ENCODE measurements at regions of chr7 and their contacts with region 1.

Region 1: DNA sequence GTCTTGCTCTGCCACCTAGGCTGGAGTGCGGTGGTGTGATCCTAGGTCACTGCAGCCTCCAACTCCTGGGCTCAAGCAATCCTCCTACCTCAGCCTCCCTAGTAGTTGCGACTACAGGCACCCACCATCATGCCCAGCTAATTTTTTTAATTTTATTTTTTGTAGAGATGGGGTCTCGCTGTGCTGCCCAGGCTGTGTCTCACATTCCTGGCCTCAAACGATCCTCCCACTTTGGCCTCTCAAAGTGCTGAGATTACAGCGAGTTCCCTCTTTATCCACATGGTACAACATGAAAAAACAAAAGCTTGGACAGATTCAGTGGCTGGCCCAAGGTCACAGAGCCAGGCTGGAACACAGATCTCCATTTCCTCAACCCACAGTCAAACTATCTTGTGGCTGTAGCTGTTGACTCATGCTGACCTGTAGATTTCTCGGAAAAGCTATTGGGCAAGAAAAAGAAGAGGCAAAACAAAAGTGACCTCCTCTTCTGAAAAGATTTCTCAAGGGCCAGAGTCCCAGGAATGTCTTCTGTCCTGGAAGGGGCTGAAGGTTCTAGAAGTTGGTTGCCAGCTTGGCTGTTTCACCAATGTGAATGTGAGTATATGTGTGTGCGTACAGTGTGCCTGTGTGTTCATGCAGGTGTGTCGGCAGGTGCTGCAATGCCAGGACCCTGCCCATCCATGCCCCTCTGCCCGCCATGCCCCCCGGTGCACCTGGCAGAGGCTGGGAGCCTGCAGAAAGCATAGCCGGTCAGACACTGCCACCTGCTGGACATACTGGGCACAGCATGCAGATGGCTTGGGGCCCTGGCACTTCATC is 28.4 kb downstream of the TMEM130 start:
- DNase-seq: peak; percentile 75
- ATAC-seq: peak; percentile 92
- H3K4me3 ChIP-seq: no peak overlapping the region
- H3K4me3 Mint-ChIP-seq: no peak overlapping the region
- H3K27ac ChIP-seq: no peak overlapping the region
- H3K27ac Mint-ChIP-seq: no peak overlapping the region
- H3K4me1 ChIP-seq: no peaks in the 10 kb centered on the region
- H3K4me1 Mint-ChIP-seq: no peaks in the 10 kb centered on the region
- H3K27me3 ChIP-seq: no peaks in the 10 kb centered on the region
- H3K27me3 Mint-ChIP-seq: peaks cover 20% of the 10 kb centered on the region
- CTCF ChIP-seq: peak; percentile 96

Region 2: GRCh38 chr7:98021588-98022351 is 819.6 kb before region 1 on chr7:
- CTCF ChIA-PET with region 1: interaction called, 5 read pairs
- POLR2A ChIA-PET with region 1: no interaction called
- intact Hi-C with region 1: loop called (anchors 10 kb)
- DNase-seq: peak; percentile 81
- ATAC-seq: peak; percentile 75
- H3K4me3 ChIP-seq: no peak overlapping the region
- H3K4me3 Mint-ChIP-seq: no peak overlapping the region
- H3K27ac ChIP-seq: no peak overlapping the region
- H3K27ac Mint-ChIP-seq: peak overlapping the region; percentile 34
- H3K4me1 ChIP-seq: no peaks in the 10 kb centered on the region
- H3K4me1 Mint-ChIP-seq: peaks cover 4% of the 10 kb centered on the region
- H3K27me3 ChIP-seq: peaks cover 0 to 25% (median 1%) of the 10 kb centered on the region in 4 experiments
- H3K27me3 Mint-ChIP-seq: peaks cover 23% of the 10 kb centered on the region
- CTCF ChIP-seq: peak; percentile 90

Region 3: DNA sequence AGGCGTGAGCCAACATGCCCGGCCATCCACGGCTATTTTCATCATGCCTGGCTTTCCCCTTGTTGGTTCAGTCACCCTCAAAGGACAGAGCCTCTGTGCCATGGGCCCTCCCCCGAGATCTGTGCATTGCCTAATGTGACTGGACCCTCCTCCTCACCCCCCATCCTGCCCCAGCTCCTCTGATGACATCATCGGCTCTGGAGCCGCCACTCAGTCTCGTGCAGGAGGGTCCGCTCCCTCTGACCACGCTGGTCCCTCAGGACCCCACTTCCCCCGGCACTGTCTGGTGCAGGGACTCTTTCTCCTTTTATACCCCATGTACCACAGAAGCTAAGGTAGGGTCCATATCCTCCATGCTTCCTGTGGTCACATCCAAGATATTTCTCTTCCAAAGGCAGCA is 407.3 kb before region 1 on chr7:
- CTCF ChIA-PET with region 1: interaction called, 53 read pairs
- POLR2A ChIA-PET with region 1: no interaction called
- intact Hi-C with region 1: no loop called
- DNase-seq: no peak
- ATAC-seq: no peak
- H3K4me3 ChIP-seq: no peak overlapping the region
- H3K4me3 Mint-ChIP-seq: no peak overlapping the region
- H3K27ac ChIP-seq: no peak overlapping the region
- H3K27ac Mint-ChIP-seq: no peak overlapping the region
- H3K4me1 ChIP-seq: peaks cover 0 to 5% of the 10 kb centered on the region in 2 donors
- H3K4me1 Mint-ChIP-seq: peaks cover 9% of the 10 kb centered on the region
- H3K27me3 ChIP-seq: no peaks in the 10 kb centered on the region
- H3K27me3 Mint-ChIP-seq: peaks cover 21% of the 10 kb centered on the region
- CTCF ChIP-seq: no peak

Region 4: DNA sequence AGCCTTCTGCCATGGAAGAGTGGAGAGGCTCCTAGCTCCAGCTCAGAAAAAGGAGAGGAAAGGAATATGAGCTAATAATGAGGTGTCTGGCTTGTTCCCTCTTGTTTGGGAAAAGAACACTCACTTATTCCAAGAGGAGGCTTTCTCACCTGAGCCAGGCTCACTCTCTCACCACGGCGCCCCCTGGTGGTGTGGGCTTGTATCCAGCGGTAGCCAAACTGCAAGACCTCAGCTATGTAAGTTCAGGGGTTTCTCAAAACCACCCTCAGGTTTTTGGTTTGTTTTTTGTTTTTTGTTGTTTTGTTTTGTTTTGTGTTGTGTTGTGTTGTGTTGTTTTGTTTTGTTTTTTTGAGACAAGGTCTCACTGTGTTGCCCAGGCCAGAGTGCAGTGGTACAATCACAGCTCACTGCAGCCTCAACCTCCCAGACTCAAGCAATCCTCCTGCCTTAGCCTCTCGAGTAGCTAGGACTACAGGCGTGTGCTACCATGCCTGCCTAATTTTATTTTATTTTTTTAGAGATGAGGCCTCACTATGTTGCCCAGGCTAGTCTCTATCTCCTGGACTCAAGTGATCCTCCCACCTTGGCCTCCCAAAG is 95.6 kb before region 1 on chr7:
- CTCF ChIA-PET with region 1: interaction called, 11 read pairs
- POLR2A ChIA-PET with region 1: no interaction called
- intact Hi-C with region 1: no loop called
- DNase-seq: peak; percentile 65
- ATAC-seq: no peak
- H3K4me3 ChIP-seq: no peak overlapping the region
- H3K4me3 Mint-ChIP-seq: no peak overlapping the region
- H3K27ac ChIP-seq: no peak overlapping the region
- H3K27ac Mint-ChIP-seq: no peak overlapping the region
- H3K4me1 ChIP-seq: no peaks in the 10 kb centered on the region
- H3K4me1 Mint-ChIP-seq: no peaks in the 10 kb centered on the region
- H3K27me3 ChIP-seq: peaks cover 0 to 14% (median 0%) of the 10 kb centered on the region in 4 experiments
- H3K27me3 Mint-ChIP-seq: peaks cover 22% of the 10 kb centered on the region
- CTCF ChIP-seq: peak; percentile 89

Region 5: GRCh38 chr7:98878365-98879165 is 37.2 kb after region 1 on chr7 and contains the start of gene TRRAP:
- CTCF ChIA-PET with region 1: interaction called, 24 read pairs
- POLR2A ChIA-PET with region 1: no interaction called
- intact Hi-C with region 1: loop called (anchors 2 kb)
- DNase-seq: peak; percentile 91
- ATAC-seq: peak; percentile 75
- H3K4me3 ChIP-seq: peak within 1 kb of the TSS; percentile 12 to 100 (median 98)
- H3K4me3 Mint-ChIP-seq: peak within 1 kb of the TSS; percentile 92
- H3K27ac ChIP-seq: peak within 1 kb of the TSS; percentile 75 to 89
- H3K27ac Mint-ChIP-seq: peak within 1 kb of the TSS; percentile 90
- H3K4me1 ChIP-seq: peaks cover 11 to 16% of the 10 kb centered on the region in 2 donors
- H3K4me1 Mint-ChIP-seq: peaks cover 11% of the 10 kb centered on the region
- H3K27me3 ChIP-seq: peaks cover 0 to 6% (median 0%) of the 10 kb centered on the region in 4 experiments
- H3K27me3 Mint-ChIP-seq: no peaks in the 10 kb centered on the region
- CTCF ChIP-seq: peak; percentile 94
- total RNA-seq, gene TRRAP: 102 and 107 TPM in 2 replicates

Measured in B cell (primary cell).